Naive thymus-derived CD4-positive, alpha-beta T cell (primary cell): ENCODE measurements at regions of chr13 and their contacts with region 1.

Region 1: DNA sequence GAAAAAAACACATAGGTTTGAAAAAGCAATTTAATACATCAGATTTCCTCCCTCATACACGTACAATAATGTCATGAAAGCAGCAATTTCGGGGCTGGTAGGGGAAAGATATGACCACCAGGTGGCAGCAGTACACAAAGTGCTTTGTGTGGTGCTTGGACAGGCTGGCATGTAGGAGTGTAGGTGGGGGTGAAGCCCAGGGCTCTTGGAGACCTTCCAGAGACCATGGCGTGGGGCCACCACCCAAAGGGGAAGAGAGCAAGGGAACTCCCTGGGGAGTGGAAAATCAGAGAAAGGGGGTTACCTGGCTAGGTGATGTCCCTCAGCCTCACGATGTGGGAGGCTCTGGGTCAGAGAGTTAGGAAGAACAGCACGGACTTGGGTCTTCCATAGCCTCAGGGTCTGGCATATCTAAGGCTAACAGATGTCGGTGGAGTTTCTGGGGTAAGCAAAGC is 11.8 kb upstream of the CCNA1 start:
- DNase-seq: peak in 8 of 9 donors; percentile 15 to 69 (median 52)
- ATAC-seq: peak; percentile 85
- H3K4me3 ChIP-seq: no peak overlapping the region
- H3K4me3 Mint-ChIP-seq: peak overlapping the region in 1 of 10 donors; percentile 51
- H3K27ac ChIP-seq: no peak overlapping the region
- H3K27ac Mint-ChIP-seq: peak overlapping the region in 1 of 9 donors; percentile 54
- H3K4me1 ChIP-seq: no peaks in the 10 kb centered on the region
- H3K4me1 Mint-ChIP-seq: peaks cover 0 to 41% (median 0%) of the 10 kb centered on the region in 7 donors
- H3K27me3 ChIP-seq: no peaks in the 10 kb centered on the region
- H3K27me3 Mint-ChIP-seq: peaks cover 16 to 71% (median 61%) of the 10 kb centered on the region in 5 donors

Region 2: DNA sequence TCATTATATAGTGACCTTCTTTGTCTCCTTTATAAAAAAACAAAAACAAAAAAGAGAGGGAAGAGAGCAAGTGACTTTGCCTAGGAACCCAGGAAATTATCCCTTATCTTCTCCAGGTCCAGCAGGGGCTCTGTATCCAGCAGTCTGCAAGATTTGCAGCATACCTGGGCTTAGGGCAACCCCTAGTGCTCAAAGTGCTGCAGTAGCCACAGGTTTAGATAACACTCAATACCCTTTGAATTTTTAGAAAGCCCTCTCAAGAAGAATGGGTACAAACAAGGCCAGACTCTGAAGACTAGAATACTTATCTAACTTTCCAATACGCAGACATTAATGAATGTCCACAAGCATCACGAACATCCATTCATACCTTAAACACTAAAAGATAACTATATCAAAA is 55.0 kb after region 1 on chr13:
- CTCF ChIA-PET with region 1: no interaction called
- POLR2A ChIA-PET with region 1: no interaction called
- intact Hi-C with region 1: loop called in 1 of 2 experiments (anchors 2 kb)
- DNase-seq: no peak
- ATAC-seq: no peak
- H3K4me3 ChIP-seq: no peak overlapping the region
- H3K4me3 Mint-ChIP-seq: no peak overlapping the region
- H3K27ac ChIP-seq: no peak overlapping the region
- H3K27ac Mint-ChIP-seq: no peak overlapping the region
- H3K4me1 ChIP-seq: no peaks in the 10 kb centered on the region
- H3K4me1 Mint-ChIP-seq: no peaks in the 10 kb centered on the region
- H3K27me3 ChIP-seq: no peaks in the 10 kb centered on the region
- H3K27me3 Mint-ChIP-seq: peaks cover 2 to 44% (median 26%) of the 10 kb centered on the region in 5 donors

Region 3: DNA sequence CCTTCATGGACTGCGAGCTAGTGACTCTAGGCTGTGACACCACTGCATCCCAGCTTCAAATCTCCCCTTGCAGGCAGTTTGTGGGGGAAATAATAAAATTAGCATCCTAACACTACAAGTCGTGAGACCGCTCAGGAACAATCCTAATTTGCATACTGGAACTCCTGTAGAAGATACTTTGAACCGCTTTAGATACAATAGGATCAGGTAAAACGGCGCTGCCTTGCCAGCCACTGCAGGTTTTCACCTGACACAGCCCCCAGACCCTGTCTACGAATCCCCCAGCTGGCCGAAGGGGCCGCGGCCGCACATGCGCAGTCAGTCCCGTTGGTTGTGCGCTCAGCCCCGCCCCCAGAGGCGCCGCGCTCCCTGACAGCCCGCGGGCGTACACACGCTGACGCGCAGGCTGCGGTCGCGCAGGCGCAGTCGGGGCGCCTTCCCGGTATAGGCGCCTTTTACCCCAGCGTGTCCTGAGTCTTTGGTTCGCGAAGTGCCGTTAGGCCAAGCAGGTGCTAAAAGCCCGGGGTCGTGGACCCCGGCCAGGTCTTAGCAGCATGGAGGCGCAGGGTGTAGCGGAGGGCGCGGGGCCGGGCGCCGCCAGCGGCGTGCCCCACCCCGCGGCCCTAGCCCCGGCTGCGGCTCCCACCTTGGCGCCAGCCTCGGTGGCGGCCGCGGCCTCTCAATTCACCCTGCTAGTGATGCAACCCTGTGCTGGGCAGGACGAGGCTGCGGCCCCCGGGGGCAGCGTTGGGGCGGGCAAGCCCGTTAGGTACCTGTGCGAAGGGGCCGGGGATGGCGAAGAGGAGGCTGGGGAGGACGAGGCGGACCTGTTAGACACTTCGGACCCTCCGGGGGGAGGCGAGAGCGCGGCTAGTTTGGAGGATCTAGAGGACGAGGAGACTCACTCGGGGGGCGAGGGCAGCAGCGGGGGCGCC is 398.6 kb after region 1 on chr13 and contains the start of gene RFXAP:
- CTCF ChIA-PET with region 1: no interaction called
- POLR2A ChIA-PET with region 1: no interaction called
- intact Hi-C with region 1: loop called in 1 of 2 experiments (anchors 5 kb)
- DNase-seq: peak; percentile 84 to 95 (median 92)
- ATAC-seq: peak; percentile 96
- H3K4me3 ChIP-seq: peak within 1 kb of the TSS; percentile 86
- H3K4me3 Mint-ChIP-seq: peak within 1 kb of the TSS; percentile 90 to 98 (median 92)
- H3K27ac ChIP-seq: peak within 1 kb of the TSS; percentile 93
- H3K27ac Mint-ChIP-seq: peak within 1 kb of the TSS; percentile 70 to 96 (median 94)
- H3K4me1 ChIP-seq: peaks cover 11 to 12% of the 10 kb centered on the region in 2 donors
- H3K4me1 Mint-ChIP-seq: peaks cover 29 to 60% (median 54%) of the 10 kb centered on the region in 7 donors
- H3K27me3 ChIP-seq: no peaks in the 10 kb centered on the region
- H3K27me3 Mint-ChIP-seq: peaks cover 0 to 17% (median 6%) of the 10 kb centered on the region in 5 donors
- total RNA-seq, gene RFXAP: 4.9 to 12.7 (median 12.0) TPM

Region 4: GRCh38 chr13:36981156-36981743 is 560.8 kb after region 1 on chr13:
- CTCF ChIA-PET with region 1: interaction called, 3 read pairs
- POLR2A ChIA-PET with region 1: no interaction called
- intact Hi-C with region 1: loop called in 1 of 2 experiments (anchors 1 kb)
- DNase-seq: peak in 3 of 9 donors; percentile 2 to 18 (median 5)
- ATAC-seq: peak; percentile 49
- H3K4me3 ChIP-seq: no peak overlapping the region
- H3K4me3 Mint-ChIP-seq: no peak overlapping the region
- H3K27ac ChIP-seq: no peak overlapping the region
- H3K27ac Mint-ChIP-seq: peak overlapping the region in 1 of 9 donors; percentile 10
- H3K4me1 ChIP-seq: no peaks in the 10 kb centered on the region
- H3K4me1 Mint-ChIP-seq: peaks cover 0 to 15% (median 2%) of the 10 kb centered on the region in 7 donors
- H3K27me3 ChIP-seq: no peaks in the 10 kb centered on the region
- H3K27me3 Mint-ChIP-seq: no peaks in the 10 kb centered on the region

Region 5: GRCh38 chr13:37058910-37059847 is 638.7 kb after region 1 on chr13 and contains the start of gene SUPT20H:
- CTCF ChIA-PET with region 1: no interaction called
- POLR2A ChIA-PET with region 1: no interaction called
- intact Hi-C with region 1: loop called in 1 of 2 experiments (anchors 5 kb)
- DNase-seq: peak; percentile 85 to 94 (median 91)
- ATAC-seq: peak; percentile 98
- H3K4me3 ChIP-seq: peak within 1 kb of the TSS; percentile 77
- H3K4me3 Mint-ChIP-seq: peak within 1 kb of the TSS; percentile 87 to 99 (median 94)
- H3K27ac ChIP-seq: peak within 1 kb of the TSS; percentile 93
- H3K27ac Mint-ChIP-seq: peak within 1 kb of the TSS; percentile 93 to 99 (median 98)
- H3K4me1 ChIP-seq: peaks cover 13 to 15% of the 10 kb centered on the region in 2 donors
- H3K4me1 Mint-ChIP-seq: peaks cover 13 to 59% (median 50%) of the 10 kb centered on the region in 7 donors
- H3K27me3 ChIP-seq: no peaks in the 10 kb centered on the region
- H3K27me3 Mint-ChIP-seq: peaks cover 0 to 10% (median 0%) of the 10 kb centered on the region in 5 donors
- total RNA-seq, gene SUPT20H: 70.5 to 106 (median 86.1) TPM